BJ (cell line): ENCODE measurements at regions of chr12 and their contacts with region 1.

Region 1: DNA sequence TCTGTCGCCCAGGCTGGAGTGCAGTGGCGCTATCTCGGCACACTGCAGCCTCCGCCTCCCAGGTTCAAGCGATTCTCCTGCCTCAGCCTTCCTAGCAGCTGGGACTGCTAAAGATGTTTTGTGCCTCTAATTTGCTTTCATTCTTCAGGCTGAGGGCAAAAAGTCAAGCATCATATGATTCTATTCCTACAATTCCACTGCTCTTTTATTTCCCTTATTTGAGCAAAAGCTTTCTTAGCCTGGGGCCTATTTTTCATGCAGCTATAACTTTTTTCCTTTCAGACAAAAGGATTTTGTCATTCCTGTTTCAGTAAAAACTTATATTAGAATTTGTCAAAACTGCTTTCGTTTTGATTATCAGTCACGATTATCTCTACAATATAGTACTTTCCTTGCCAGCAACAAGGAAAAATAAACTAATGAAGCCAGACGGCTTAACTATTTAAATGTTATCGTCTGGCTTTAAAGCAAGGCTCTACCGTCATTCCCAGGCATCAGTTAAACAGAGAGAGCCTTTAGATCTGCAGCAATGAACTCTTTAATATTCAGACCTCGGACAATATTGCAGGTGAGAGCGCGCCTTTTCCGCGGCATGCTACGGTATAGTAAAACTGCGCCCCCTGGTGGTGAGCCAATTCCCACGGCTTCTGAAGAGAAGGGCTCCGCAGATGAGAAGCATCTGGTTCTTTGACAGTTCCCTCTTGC is 1.4 kb upstream of the SLC2A13 start:
- DNase-seq: no peak
- H3K4me3 ChIP-seq: peak overlapping the region; percentile 22
- H3K27me3 ChIP-seq: no peaks in the 10 kb centered on the region
- CTCF ChIP-seq: peak; percentile 89

Region 2: GRCh38 chr12:40010899-40011774 is 96.1 kb before region 1 on chr12:
- CTCF ChIA-PET with region 1: interaction called, 69 read pairs
- POLR2A ChIA-PET with region 1: no interaction called
- DNase-seq: no peak
- H3K4me3 ChIP-seq: no peak overlapping the region
- H3K27me3 ChIP-seq: no peaks in the 10 kb centered on the region
- CTCF ChIP-seq: peak; percentile 82

Region 3: DNA sequence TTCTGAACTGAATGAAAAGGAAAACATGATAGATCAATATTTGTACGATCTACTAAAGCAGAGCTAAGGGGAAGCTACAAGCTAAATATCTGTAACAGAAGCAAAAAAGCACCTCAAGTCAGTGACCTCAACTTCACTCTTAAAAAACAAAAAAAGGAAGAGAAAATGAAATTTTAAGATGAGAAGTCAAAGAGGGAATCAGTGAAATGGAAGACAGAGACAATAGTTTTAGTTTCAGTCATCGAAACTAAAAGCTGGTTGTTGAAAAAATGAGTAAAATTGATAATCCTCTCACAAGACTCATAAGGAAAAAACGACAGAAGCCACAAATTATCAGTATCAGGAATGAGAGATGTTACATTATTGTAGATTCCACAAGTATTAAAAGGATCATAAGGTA is 10.6 kb after region 1 on chr12:
- CTCF ChIA-PET with region 1: interaction called, 20 read pairs
- POLR2A ChIA-PET with region 1: no interaction called
- DNase-seq: no peak
- H3K4me3 ChIP-seq: no peak overlapping the region
- H3K27me3 ChIP-seq: no peaks in the 10 kb centered on the region
- CTCF ChIP-seq: no peak

Region 4: GRCh38 chr12:40655451-40655850 is 548.2 kb after region 1 on chr12:
- CTCF ChIA-PET with region 1: no interaction called
- POLR2A ChIA-PET with region 1: no interaction called
- DNase-seq: no peak
- H3K4me3 ChIP-seq: no peak overlapping the region
- H3K27me3 ChIP-seq: no peaks in the 10 kb centered on the region
- CTCF ChIP-seq: no peak